ENCODE measurements at regions of chr20 and their contacts with region 1.

Region 1: GRCh38 chr20:354298-355064 is 7.6 kb downstream of the NRSN2 start:
- DNase-seq: peak; percentile 83 to 92 (median 86)
- H3K4me3 ChIP-seq: no peak overlapping the region
- H3K27ac ChIP-seq: no peak overlapping the region
- H3K4me1 ChIP-seq: no peaks in the 10 kb centered on the region
- H3K27me3 ChIP-seq: no peaks in the 10 kb centered on the region
- CTCF ChIP-seq: peak; percentile 95

Region 2: GRCh38 chr20:478949-479429 is 124.5 kb after region 1 on chr20:
- intact Hi-C with region 1: loop called (anchors 5 kb)
- DNase-seq: peak in 3 of 5 donors; percentile 18 to 80 (median 73)
- H3K4me3 ChIP-seq: no peak overlapping the region
- H3K27ac ChIP-seq: no peak overlapping the region
- H3K4me1 ChIP-seq: no peaks in the 10 kb centered on the region
- H3K27me3 ChIP-seq: no peaks in the 10 kb centered on the region
- CTCF ChIP-seq: peak; percentile 58

Region 3: GRCh38 chr20:513429-513828 is 158.9 kb after region 1 on chr20:
- intact Hi-C with region 1: no loop called
- DNase-seq: no peak
- H3K4me3 ChIP-seq: no peak overlapping the region
- H3K27ac ChIP-seq: no peak overlapping the region
- H3K4me1 ChIP-seq: peaks cover 0 to 7% (median 0%) of the 10 kb centered on the region in 3 donors
- H3K27me3 ChIP-seq: no peaks in the 10 kb centered on the region
- CTCF ChIP-seq: no peak

Measured in kidney (tissue), 22 donors.